SK-N-SH (cell line): ENCODE measurements at regions of chr6 and their contacts with region 1.

Region 1: DNA sequence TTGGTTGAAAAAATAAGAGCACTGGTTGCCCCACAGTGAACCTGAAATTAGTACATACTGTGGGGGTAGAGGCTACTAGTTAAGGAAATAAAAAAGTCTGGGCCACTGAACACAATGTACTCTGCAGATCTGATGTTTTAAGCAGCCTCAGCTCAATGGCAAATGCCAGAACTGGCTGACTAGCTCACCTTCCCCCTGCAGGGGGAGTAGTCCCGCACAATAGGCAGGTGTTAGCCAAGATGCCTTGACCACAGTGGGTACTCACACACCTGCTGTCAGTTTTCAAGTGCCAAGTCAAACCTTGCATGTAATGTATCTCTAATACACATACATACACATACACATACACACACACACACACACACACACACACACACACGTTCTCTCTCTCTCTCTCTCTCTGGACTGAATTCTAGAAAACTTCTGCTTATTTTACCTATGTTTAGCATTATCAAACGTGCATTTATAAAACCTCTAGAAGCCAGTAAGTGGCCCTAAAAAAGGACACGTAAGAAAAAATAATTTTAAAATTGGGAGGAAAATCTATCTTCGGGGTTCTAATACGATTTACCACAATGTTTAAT is 36.1 kb downstream of the GMDS start:
- DNase-seq: peak; percentile 40
- H3K4me3 ChIP-seq: no peak overlapping the region
- H3K27ac ChIP-seq: no peak overlapping the region
- H3K4me1 ChIP-seq: no peaks in the 10 kb centered on the region
- H3K27me3 ChIP-seq: no peaks in the 10 kb centered on the region
- CTCF ChIP-seq: peak; percentile 56
- EP300 ChIP-seq: no peak
- RAD21 ChIP-seq: peak; percentile 56

Region 2: GRCh38 chr6:2186516-2186915 is 22.8 kb before region 1 on chr6:
- CTCF ChIA-PET with region 1: no interaction called
- POLR2A ChIA-PET with region 1: no interaction called
- DNase-seq: no peak
- H3K4me3 ChIP-seq: no peak overlapping the region
- H3K27ac ChIP-seq: no peak overlapping the region
- H3K4me1 ChIP-seq: 0 out of 4 replicates have a peak, but pooled peaks cover 0 to 5% of the 10 kb centered on the region in 2 experiments
- H3K27me3 ChIP-seq: no peaks in the 10 kb centered on the region
- CTCF ChIP-seq: no peak
- EP300 ChIP-seq: no peak
- RAD21 ChIP-seq: no peak

Region 3: DNA sequence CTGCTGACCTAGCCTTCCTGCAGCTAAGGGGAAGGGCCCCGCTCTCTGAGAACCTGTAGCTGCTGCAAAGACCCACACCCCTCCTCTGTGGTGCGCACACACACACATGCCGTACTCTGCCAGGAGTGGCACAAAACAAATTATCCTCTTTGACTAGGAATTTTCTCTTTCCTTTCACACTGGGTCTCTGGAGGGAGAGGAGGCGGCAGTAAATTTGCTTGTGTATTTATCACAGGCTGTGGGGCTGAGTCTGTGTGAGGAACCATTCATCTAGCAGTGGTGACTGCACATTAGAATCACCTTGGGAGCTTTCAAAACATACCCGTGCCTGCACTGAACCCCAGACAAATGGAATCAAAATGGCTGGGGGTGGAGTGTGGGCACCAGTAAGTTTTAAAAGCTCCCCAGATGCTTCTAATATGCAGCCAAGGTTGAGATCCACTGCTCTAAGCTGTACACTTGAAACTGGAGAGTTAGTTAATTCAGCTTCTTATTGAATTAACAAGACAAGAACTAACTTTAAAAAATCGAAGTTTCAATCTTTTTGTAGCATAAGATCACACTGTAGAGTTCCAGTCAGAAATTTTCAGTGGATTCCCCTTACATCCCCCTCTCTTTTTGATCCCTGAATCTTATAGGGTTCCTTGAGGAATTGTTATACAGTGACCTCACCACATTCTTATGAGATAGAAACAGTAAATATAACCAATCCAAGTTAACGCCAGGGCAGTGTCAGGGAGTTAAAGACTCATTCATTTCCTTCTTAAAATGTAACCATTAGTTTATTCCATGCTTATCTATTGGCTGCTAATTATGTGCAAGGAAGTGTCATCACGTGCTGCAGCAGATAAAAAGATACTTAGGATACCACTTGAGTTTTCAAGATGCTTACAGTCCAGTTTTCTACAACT is 65.9 kb after region 1 on chr6:
- CTCF ChIA-PET with region 1: no interaction called
- POLR2A ChIA-PET with region 1: no interaction called
- DNase-seq: no peak
- H3K4me3 ChIP-seq: no peak overlapping the region; a peak in 1 of 4 replicates
- H3K27ac ChIP-seq: no peak overlapping the region
- H3K4me1 ChIP-seq: peaks cover 0 to 5% of the 10 kb centered on the region in 2 experiments; a peak in 1 of 4 replicates
- H3K27me3 ChIP-seq: no peaks in the 10 kb centered on the region
- CTCF ChIP-seq: no peak
- EP300 ChIP-seq: no peak
- RAD21 ChIP-seq: no peak

Region 4: DNA sequence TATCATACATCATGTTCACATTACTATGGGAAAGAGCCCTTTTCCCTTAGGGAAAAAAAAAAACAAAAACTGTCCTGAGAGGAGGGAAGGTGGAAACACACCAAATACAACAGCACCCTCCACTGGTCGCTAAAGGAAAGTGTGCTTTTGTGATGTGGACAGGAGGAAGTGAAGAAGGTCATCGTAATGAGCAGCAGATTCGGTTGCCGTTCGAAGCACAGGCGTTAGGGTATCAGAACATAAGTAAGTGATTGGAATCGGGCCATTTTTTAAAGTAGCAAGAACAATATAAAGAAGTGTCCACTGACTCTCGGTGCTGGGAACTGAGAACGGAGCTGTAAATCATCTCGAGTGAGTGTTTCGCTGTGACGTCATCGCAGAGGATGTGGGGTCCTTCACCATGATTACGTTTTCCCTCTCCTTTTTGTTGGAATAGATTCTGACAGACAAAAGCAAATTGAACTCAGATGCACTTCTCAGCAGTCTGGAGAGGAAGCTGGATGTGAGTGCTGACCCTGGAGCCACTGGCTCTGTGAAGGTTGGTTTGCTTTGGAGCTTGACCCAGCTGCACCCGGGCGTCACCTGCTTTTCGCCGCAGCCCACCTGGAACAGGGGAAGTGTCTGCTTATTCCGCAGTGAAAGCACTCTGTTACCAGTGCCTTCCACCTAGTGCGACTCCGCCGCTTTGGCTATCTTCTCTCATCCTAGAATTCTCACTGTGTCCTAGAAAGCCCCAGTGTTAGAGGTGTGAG is 239.7 kb after region 1 on chr6:
- CTCF ChIA-PET with region 1: interaction called, 17 read pairs
- POLR2A ChIA-PET with region 1: no interaction called
- DNase-seq: peak; percentile 69
- H3K4me3 ChIP-seq: peak overlapping the region; percentile 30 to 59
- H3K27ac ChIP-seq: no peak overlapping the region
- H3K4me1 ChIP-seq: peaks cover 0 to 16% of the 10 kb centered on the region in 2 experiments; a peak in 2 of 4 replicates
- H3K27me3 ChIP-seq: no peaks in the 10 kb centered on the region; the same call in 1 of the 2 replicates
- CTCF ChIP-seq: peak; percentile 81
- EP300 ChIP-seq: no peak
- RAD21 ChIP-seq: peak; percentile 81